ENCODE measurements at regions of chr12 and their contacts with region 1.

Region 1: DNA sequence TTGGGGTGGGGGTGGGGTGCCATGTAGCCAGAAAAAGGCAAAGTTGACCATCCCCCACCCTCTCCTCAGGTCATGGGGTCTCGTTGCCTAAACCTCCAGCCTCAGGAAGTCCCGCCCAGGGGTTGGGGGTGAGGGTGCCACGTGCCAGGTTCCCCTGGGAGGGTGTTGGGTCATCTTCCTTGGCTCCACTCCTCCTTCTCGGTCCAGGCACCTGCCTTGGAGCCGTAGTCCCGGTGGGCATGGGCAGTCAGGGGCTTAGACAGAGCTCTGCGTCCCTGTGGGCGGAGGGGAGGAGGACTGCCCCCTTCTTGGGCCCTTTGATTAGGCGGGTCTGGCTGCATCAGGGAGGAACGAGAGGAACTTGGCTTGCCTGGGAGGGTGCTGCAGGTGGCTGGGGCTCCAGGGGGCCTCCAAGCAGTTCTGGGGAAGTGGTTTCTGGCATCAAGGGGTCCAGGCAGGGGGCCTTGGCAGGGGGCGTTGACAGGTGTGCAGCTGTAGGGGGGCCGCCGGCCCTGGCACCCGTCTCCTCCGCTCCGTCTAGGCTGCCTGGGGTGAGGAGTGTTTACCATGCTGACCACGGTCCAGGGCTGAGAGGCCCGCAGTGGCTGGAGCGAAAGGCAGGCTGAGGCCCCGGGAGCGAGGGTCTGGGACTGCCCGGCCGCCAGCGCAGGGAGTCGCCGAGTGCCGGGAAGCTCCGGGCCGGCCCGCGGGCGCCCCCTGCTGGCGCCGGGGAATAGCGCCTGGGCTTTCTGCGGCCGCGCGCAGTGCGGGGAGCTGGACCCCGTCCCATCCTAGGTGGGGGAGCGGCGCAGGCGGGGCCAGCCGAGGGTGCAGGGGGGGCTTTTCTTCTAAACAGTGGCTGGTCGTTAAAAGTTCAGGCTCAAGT is 7.9 kb downstream of the SETD1B start:
- DNase-seq: peak; percentile 79 to 88
- ATAC-seq: peak; percentile 89 to 95 (median 90)
- H3K4me3 ChIP-seq: peak overlapping the region; percentile 78
- H3K27ac ChIP-seq: peak overlapping the region; percentile 76
- H3K4me1 ChIP-seq: peaks cover 40% of the 10 kb centered on the region
- H3K27me3 ChIP-seq: no peaks in the 10 kb centered on the region
- CTCF ChIP-seq: peak; percentile 99

Region 2: DNA sequence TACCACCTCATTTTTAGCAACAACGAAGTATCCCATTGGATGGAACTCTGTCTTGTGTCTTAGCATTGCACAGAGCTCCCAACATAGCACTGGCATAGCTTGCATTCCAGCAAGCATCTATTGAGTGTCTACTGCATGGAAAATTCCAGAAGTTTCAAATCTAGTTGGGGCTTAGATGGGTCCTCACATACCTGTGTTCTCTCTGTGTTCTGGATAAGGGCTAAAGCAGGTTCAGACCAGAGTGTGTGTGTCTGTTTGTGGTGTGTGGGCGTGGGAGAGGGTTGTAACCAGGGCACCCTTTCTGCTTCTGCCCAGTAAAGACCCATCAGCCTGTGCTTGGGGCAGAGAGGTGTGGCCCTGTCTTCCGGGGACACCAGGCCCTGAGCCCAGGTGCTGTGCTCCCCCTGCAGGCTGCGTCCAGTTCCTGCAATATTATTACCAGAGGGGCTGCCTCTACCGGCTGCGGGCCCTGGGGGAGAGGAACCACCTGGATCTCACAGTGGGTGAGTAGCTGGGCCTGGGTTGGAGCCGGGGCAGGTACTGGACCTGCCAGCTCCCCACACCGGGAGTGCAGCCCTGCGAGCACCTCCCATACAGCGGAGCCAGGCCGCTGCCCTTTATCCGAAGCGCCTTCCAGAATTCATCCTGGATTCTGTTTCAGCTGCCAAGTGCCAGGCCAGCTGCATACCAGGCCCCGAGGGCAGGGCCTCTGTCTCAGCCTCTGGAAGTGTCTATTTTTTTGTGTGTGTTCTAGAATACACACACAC is 38.5 kb before region 1 on chr12:
- intact Hi-C with region 1: loop called (anchors 5 kb)
- DNase-seq: peak; percentile 71 to 87
- ATAC-seq: peak; percentile 78 to 91 (median 87)
- H3K4me3 ChIP-seq: no peak overlapping the region
- H3K27ac ChIP-seq: peak overlapping the region; percentile 37
- H3K4me1 ChIP-seq: peaks cover 18% of the 10 kb centered on the region
- H3K27me3 ChIP-seq: no peaks in the 10 kb centered on the region
- CTCF ChIP-seq: peak; percentile 87

Region 3: DNA sequence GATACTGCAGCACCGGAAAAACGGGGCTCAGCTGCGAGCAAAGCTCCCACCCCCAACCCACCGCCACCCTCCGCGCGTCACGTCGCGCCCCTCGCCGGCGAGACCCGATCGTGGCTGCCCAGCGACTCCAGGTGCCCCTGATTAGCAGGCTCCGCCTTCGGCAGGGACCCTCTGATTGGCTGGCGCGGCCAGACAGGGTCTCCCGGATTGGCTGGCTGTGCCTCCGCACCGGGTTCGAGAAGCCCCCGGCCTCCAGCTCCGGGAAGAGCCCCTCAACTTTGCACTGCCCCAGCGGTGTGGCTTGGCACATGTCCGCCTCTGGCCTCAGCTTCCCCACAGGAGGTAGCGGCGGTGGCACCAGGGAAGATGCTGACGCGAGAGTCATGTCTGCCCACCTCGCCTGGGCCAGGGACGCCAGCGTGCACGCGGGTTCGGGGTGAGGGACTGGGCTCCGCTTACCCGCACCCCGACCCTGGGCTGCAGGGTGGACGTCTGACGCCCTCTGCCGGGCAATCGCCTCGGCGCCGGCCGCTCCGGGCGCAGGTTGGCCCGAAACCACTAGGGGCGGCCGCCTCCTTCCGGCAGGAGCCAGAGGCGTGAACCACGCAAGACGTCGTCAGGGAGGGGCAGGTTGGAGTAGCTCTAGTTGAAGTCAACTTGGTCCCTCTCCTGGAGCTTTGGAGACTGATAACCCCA is 17.7 kb before region 1 on chr12:
- intact Hi-C with region 1: loop called (anchors 1 to 2 kb)
- DNase-seq: peak; percentile 91 to 96
- ATAC-seq: peak; percentile 61 to 72 (median 64)
- H3K4me3 ChIP-seq: peak overlapping the region; percentile 86
- H3K27ac ChIP-seq: peak overlapping the region; percentile 100
- H3K4me1 ChIP-seq: peaks cover 50% of the 10 kb centered on the region
- H3K27me3 ChIP-seq: no peaks in the 10 kb centered on the region
- CTCF ChIP-seq: peak; percentile 99

Region 4: DNA sequence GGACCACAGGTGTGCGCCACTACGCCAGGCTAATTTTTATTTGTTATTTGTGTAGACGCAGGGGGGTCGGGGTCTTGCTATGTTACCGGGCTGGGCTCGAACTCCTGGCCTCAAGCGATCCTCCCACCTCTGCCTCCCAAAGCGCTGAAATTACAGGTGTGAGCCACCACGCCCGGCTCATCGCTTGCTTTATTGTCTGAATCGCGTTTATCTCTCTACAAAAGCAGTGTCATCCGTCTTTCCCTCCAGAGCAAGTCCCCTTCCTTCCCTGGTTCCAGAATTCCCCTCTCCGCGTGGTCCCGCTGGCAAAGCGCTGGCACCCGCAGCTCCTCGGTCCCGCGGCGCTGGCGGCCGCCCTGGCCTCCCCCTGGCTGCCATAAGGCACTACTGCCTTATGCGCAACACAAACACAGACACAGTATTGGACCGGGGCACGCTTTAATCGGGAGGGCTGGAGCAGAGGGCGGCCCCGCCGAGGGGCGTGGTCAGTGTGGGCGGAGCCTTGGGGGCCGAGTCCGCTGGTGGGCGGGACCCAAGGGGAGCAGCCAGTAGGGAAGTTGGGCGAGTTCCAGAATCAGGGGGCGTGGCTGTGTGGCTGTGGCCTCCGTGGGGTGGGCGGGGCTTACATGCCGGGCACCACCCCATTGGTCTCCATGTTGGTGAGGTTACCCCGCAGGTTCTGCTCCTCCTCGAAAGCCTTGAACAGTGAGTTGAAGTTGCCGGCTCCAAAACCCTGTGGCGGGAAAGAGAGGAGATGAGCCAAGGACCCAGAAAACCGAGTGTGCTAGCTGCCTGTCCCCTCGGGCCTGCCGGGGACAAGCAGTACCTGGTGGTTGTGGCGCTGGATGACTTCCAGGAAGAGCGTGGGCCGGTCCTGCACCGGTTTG is 27.7 kb after region 1 on chr12:
- intact Hi-C with region 1: no loop called
- DNase-seq: peak; percentile 99 to 100
- ATAC-seq: peak; percentile 98 to 100 (median 98)
- H3K4me3 ChIP-seq: peak overlapping the region; percentile 74
- H3K27ac ChIP-seq: peak overlapping the region; percentile 67
- H3K4me1 ChIP-seq: no peaks in the 10 kb centered on the region
- H3K27me3 ChIP-seq: no peaks in the 10 kb centered on the region
- CTCF ChIP-seq: peak; percentile 44